ENCODE measurements at regions of chr3 and their contacts with region 1.

Region 1: DNA sequence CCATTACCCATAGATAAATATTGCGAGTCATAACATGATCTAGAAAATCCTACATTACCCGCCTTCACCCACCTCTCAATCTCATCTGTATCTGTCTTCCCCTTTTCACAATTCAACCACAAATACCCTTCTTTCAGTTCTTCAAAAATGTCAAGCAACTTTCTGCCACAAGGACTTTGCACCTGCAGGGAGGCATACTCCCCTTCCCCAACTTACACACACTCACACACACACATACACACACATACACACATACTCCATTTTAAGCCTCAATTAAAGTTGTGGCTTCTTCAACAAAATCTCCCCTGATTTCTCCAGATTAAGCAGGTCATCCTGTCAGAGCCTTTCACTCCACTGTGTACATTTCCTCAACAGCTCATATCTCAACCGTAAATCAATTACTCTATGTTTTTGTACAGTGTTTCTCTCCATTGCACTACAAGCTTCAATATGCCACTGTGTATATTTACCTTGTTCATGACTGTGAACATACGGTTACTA is 33.1 kb upstream of the CCDC50 start:
- DNase-seq: peak; percentile 96
- H3K4me3 ChIP-seq: peak overlapping the region; percentile 45
- H3K27ac ChIP-seq: peak overlapping the region; percentile 94
- H3K4me1 ChIP-seq: peaks cover 87% of the 10 kb centered on the region
- CTCF ChIP-seq: no peak

Region 2: GRCh38 chr3:191253089-191253799 is 42.8 kb before region 1 on chr3:
- CTCF ChIA-PET with region 1: no interaction called
- POLR2A ChIA-PET with region 1: interaction called, 8 read pairs
- intact Hi-C with region 1: loop called (anchors 2 kb)
- DNase-seq: peak; percentile 67
- H3K4me3 ChIP-seq: peak overlapping the region; percentile 40
- H3K27ac ChIP-seq: peak overlapping the region; percentile 57
- H3K4me1 ChIP-seq: peaks cover 69% of the 10 kb centered on the region
- CTCF ChIP-seq: no peak

Region 3: DNA sequence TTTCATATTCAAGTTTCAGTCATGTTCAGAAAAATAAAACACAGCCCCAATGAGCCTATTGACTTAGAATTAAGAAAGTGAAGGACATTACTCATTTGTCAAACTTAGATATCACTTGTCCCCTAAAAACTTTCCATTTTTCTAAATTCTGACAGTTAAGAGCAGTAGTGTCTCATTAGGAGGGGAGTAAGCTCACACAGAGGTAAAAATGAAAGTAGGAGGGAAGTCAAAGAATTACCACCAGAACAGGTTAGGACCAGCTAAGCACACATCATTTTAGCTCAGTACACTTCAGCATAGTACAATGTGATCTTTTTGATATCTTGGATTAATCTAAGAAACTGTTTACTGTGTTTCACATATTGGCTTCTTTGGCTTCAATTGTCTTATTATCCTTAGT is 32.7 kb before region 1 on chr3:
- CTCF ChIA-PET with region 1: no interaction called
- POLR2A ChIA-PET with region 1: interaction called, 9 read pairs
- intact Hi-C with region 1: loop called (anchors 2 kb)
- DNase-seq: peak; percentile 44
- H3K4me3 ChIP-seq: peak overlapping the region; percentile 51
- H3K27ac ChIP-seq: peak overlapping the region; percentile 62
- H3K4me1 ChIP-seq: peaks cover 43% of the 10 kb centered on the region
- CTCF ChIP-seq: no peak

Region 4: DNA sequence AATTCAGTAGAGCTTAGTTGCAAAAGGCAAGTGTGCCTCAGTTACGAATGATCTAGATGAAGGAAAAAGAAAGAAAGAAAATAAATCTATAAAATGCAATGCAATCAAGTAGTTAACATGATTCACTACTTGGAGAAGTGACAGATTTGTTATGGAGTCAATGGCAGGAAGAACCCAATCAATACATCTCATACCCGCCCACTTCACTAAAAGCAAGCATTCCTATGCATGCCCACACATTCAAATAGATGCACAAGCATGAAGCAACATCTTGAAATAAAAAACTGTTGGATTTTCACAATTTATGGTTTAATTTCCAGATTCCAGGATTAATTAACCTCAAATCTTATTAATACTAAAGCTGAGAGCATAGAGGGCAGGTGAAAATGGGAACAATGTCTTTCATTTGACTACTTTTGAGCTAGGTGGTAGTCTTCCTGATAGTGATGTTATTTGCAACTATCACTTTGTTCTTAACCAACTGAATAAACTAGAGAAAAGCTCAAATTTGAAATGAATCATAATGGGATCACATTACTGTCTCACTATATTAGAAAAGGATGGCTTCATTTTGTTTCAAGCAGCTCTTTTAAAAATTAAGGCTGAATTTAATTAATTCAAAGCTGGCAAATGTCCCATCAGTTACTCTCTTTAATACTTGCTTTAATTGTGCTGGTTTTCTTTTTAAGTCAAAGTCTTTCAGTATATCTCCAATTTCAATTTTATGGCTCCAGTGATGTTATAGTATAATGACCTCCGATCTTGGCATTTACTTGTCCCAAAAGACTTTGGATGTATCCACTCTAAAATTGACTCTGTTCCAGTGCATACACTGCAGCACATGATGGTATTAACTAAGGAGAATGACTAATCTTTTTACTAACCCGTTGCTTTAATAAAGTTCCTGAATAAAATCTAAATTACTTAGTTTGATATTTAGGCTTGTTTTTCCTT is 13.6 kb before region 1 on chr3:
- CTCF ChIA-PET with region 1: no interaction called
- POLR2A ChIA-PET with region 1: interaction called, 12 read pairs
- intact Hi-C with region 1: no loop called
- DNase-seq: no peak
- H3K4me3 ChIP-seq: no peak overlapping the region
- H3K27ac ChIP-seq: no peak overlapping the region
- H3K4me1 ChIP-seq: no peaks in the 10 kb centered on the region
- CTCF ChIP-seq: no peak

Region 5: DNA sequence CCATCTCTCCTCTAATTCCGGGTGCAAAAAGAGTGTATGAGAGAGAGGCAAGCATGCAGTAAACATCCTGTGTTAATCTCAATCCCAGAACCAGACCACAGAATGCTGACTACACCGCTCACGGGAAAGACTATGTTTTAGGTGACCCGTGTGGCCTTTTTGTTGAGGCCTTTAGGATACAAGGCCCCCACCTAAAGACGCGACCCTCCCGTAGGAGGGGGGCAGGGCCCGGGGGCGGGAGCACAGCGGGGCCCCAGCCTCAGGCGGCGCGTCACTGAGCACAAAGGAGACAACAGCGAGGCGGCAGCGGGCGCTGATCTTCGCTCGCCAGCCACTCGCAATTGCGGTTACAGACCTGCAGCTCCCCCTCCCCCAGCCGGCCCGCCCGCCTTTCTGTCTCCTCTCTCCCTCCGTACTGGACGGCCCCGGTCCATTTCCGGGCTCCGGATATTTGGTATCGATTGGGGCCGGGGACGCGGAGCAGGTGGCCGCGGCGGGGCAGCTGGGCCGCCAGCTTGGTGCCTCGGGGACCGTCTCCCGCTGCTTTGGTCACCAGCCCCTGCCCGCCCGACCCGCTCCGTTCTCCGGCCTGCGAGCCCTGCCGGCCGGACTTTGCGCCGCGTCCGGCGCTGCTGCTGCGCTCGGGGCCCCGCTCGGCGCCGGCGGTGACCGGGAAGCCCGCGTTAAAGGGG is 33.0 kb after region 1 on chr3 and contains the start of gene CCDC50:
- CTCF ChIA-PET with region 1: no interaction called
- POLR2A ChIA-PET with region 1: interaction called, 6 read pairs
- intact Hi-C with region 1: loop called (anchors 1 kb)
- DNase-seq: peak; percentile 82
- H3K4me3 ChIP-seq: peak within 1 kb of the TSS; percentile 95
- H3K27ac ChIP-seq: peak within 1 kb of the TSS; percentile 62
- H3K4me1 ChIP-seq: peaks cover 57% of the 10 kb centered on the region
- CTCF ChIP-seq: no peak
- total RNA-seq, gene CCDC50: 31.4 and 32.2 TPM in 2 replicates